Naive thymus-derived CD4-positive, alpha-beta T cell (primary cell): ENCODE measurements at regions of chr12 and their contacts with region 1.

Region 1: GRCh38 chr12:122909442-122910288 is 13.7 kb upstream of the VPS37B start:
- DNase-seq: no peak
- ATAC-seq: no peak
- H3K4me3 ChIP-seq: no peak overlapping the region
- H3K4me3 Mint-ChIP-seq: no peak overlapping the region
- H3K27ac ChIP-seq: no peak overlapping the region
- H3K27ac Mint-ChIP-seq: peak overlapping the region in 3 of 9 donors; percentile 6 to 65 (median 26)
- H3K4me1 ChIP-seq: no peaks in the 10 kb centered on the region
- H3K4me1 Mint-ChIP-seq: peaks cover 0 to 4% (median 0%) of the 10 kb centered on the region in 7 donors
- H3K27me3 ChIP-seq: no peaks in the 10 kb centered on the region
- H3K27me3 Mint-ChIP-seq: peaks cover 0 to 17% (median 0%) of the 10 kb centered on the region in 5 donors

Region 2: DNA sequence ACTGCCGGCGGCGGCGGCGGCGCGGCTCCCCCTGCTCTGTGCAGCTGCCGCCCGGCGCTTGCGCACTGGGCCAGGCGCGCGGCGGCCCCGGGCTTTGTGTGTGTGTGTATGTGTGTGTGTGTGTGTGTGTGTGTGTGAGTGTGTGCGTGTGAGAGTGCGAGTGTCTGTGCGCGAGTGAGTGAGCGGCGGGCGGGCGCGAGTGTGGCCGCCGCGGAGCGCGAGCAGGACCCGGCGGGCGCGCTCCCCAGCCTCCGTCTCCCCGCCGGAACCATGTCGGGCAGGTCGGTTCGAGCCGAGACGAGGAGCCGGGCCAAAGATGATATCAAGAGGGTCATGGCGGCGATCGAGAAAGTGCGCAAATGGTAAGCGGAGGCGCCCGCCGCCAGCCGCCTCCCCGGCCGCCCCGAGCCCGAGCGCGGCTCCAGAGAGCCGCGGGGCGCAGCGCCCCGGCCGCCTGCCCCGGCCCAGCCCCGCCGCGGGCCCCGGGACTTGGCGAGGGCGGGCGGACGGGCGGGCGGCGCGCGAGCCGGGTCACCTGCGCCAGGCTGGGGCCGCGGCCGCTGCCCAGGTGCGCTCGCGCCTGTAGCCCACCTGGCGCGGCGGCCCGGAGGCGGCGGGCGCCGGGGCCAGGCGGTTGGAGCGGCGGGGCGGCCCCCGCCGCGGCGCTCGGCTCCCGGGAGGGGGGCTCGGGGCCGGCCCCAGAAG is 887.7 kb before region 1 on chr12 and contains the start of gene BCL7A:
- CTCF ChIA-PET with region 1: interaction called, 11 read pairs
- POLR2A ChIA-PET with region 1: no interaction called
- intact Hi-C with region 1: no loop called
- DNase-seq: peak; percentile 28 to 70 (median 64)
- ATAC-seq: peak; percentile 86
- H3K4me3 ChIP-seq: peak within 1 kb of the TSS; percentile 57
- H3K4me3 Mint-ChIP-seq: peak within 1 kb of the TSS; percentile 86 to 96 (median 92)
- H3K27ac ChIP-seq: peak within 1 kb of the TSS; percentile 43
- H3K27ac Mint-ChIP-seq: peak within 1 kb of the TSS in 8 of 9 donors; percentile 76 to 96 (median 84)
- H3K4me1 ChIP-seq: peaks cover 0 to 18% of the 10 kb centered on the region in 2 donors
- H3K4me1 Mint-ChIP-seq: peaks cover 0 to 13% (median 10%) of the 10 kb centered on the region in 7 donors
- H3K27me3 ChIP-seq: no peaks in the 10 kb centered on the region
- H3K27me3 Mint-ChIP-seq: peaks cover 5 to 31% (median 6%) of the 10 kb centered on the region in 5 donors
- total RNA-seq, gene BCL7A: 4.1 to 6.6 (median 5.4) TPM